ENCODE measurements at regions of chr1 and their contacts with region 1.

Region 1: GRCh38 chr1:173476664-173477285 is 360 bp upstream of the PRDX6 start:
- DNase-seq: peak in 9 of 10 donors; percentile 56 to 88 (median 82)
- ATAC-seq: peak; percentile 77 to 82
- H3K4me3 Mint-ChIP-seq: peak overlapping the region; percentile 82 to 94 (median 92)
- H3K27ac Mint-ChIP-seq: peak overlapping the region; percentile 57 to 96 (median 94)
- H3K4me1 Mint-ChIP-seq: peaks cover 40 to 65% (median 61%) of the 10 kb centered on the region in 4 donors
- H3K27me3 Mint-ChIP-seq: no peaks in the 10 kb centered on the region

Region 2: GRCh38 chr1:173444757-173445156 is 32.0 kb before region 1 on chr1:
- POLR2A ChIA-PET with region 1: interaction called, 10 read pairs
- DNase-seq: peak in 6 of 10 donors; percentile 5 to 80 (median 42)
- ATAC-seq: peak; percentile 95 to 96
- H3K4me3 Mint-ChIP-seq: peak overlapping the region in 9 of 10 donors; percentile 19 to 67 (median 53)
- H3K27ac Mint-ChIP-seq: peak overlapping the region; percentile 0 to 74 (median 42)
- H3K4me1 Mint-ChIP-seq: peaks cover 16 to 40% (median 23%) of the 10 kb centered on the region in 4 donors
- H3K27me3 Mint-ChIP-seq: no peaks in the 10 kb centered on the region

Region 3: DNA sequence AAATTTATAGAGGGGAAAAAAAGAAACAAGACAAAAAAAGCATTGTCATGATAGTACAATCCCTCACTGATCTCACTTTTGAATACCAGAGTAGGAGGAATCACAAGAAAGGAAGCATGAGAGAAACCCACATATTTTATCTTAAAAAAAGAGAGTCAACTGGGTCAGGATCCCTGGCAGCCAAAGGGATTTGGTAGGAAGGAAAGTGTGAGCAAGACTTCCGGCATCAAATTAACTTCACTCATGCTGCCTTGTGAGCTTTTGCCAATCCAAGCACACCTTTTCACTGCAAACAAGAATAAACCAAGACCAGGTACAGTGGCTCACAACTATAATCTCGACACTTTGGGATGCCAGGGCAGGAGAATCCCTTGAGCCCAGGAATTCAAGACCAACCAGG is 73.0 kb after region 1 on chr1:
- POLR2A ChIA-PET with region 1: interaction called, 10 read pairs
- DNase-seq: no peak
- ATAC-seq: no peak
- H3K4me3 Mint-ChIP-seq: peak overlapping the region in 5 of 10 donors; percentile 22 to 59 (median 48)
- H3K27ac Mint-ChIP-seq: peak overlapping the region in 9 of 10 donors; percentile 31 to 86 (median 69)
- H3K4me1 Mint-ChIP-seq: peaks cover 21 to 72% (median 59%) of the 10 kb centered on the region in 4 donors
- H3K27me3 Mint-ChIP-seq: no peaks in the 10 kb centered on the region

Region 4: GRCh38 chr1:173714759-173715537 is 238.2 kb after region 1 on chr1 and contains the start of gene KLHL20:
- POLR2A ChIA-PET with region 1: interaction called, 34 read pairs
- DNase-seq: peak; percentile 64 to 93 (median 88)
- ATAC-seq: peak; percentile 97
- H3K4me3 Mint-ChIP-seq: peak within 1 kb of the TSS; percentile 92 to 100 (median 98)
- H3K27ac Mint-ChIP-seq: peak within 1 kb of the TSS; percentile 92 to 98 (median 96)
- H3K4me1 Mint-ChIP-seq: peaks cover 9 to 37% (median 30%) of the 10 kb centered on the region in 4 donors
- H3K27me3 Mint-ChIP-seq: peaks cover 11 to 21% (median 13%) of the 10 kb centered on the region in 5 donors
- polyA plus RNA-seq, gene KLHL20: 21.1 to 27.1 (median 21.9) TPM

Region 5: DNA sequence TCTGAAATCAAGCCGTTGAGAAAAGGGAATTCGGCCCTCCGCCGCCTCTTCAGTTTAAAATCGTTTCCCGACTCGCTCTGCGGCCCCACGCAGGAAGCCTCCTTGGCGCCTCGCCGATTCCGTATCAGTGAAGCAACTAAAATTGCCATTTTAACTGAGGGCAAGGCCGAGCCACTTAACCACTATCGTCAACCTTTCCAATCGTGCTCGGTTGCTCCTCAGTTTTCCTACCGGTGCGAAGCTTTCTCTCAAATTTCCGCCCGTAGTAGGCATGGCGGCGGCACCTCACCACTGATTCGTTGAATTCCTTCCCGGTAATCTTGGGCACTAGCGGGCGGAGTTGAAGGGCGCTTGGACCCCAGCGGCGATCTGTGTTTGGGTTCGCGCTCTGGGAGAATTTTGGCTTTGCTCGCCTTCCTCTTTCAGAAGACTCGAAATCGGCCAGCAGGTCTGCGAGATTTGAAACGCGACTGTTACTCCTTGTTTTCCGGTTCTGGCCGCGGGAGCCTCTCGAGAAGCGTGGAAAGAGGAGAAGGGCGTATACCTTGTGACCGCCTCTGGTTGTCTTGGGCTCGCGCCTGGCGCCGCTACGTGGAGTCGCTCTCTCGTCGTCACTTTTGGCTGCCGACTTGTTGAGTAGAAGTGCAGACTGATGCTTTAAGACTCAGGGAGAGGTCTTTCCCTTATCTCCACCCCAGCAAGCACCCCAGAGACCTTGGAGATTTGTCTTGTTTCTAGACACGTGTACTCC is 347.7 kb after region 1 on chr1 and contains the starts of genes CENPL and DARS2:
- POLR2A ChIA-PET with region 1: interaction called, 24 read pairs
- DNase-seq: peak; percentile 74 to 94 (median 90)
- ATAC-seq: peak; percentile 89 to 91
- H3K4me3 Mint-ChIP-seq: peak within 1 kb of the TSS; percentile 91 to 99 (median 98)
- H3K27ac Mint-ChIP-seq: peak within 1 kb of the TSS; percentile 92 to 98 (median 96)
- H3K4me1 Mint-ChIP-seq: peaks cover 28 to 62% (median 50%) of the 10 kb centered on the region in 4 donors
- H3K27me3 Mint-ChIP-seq: no peaks in the 10 kb centered on the region
- polyA plus RNA-seq, gene CENPL: 4.4 to 9.2 (median 7.0) TPM
- polyA plus RNA-seq, gene DARS2: 6.7 to 12.1 (median 7.3) TPM

Region 6: GRCh38 chr1:173867753-173868265 is 391.0 kb after region 1 on chr1 and contains the start of gene GAS5:
- POLR2A ChIA-PET with region 1: interaction called, 26 read pairs
- DNase-seq: peak; percentile 90 to 100 (median 99)
- ATAC-seq: peak; percentile 75 to 79
- H3K4me3 Mint-ChIP-seq: peak within 1 kb of the TSS; percentile 87 to 99 (median 97)
- H3K27ac Mint-ChIP-seq: peak within 1 kb of the TSS; percentile 95 to 99 (median 98)
- H3K4me1 Mint-ChIP-seq: peaks cover 29 to 82% (median 74%) of the 10 kb centered on the region in 4 donors
- H3K27me3 Mint-ChIP-seq: no peaks in the 10 kb centered on the region
- polyA plus RNA-seq, gene GAS5: 503 to 660 (median 547) TPM